AG04449 (cell line): ENCODE measurements at regions of chr11 and their contacts with region 1.

Region 1: DNA sequence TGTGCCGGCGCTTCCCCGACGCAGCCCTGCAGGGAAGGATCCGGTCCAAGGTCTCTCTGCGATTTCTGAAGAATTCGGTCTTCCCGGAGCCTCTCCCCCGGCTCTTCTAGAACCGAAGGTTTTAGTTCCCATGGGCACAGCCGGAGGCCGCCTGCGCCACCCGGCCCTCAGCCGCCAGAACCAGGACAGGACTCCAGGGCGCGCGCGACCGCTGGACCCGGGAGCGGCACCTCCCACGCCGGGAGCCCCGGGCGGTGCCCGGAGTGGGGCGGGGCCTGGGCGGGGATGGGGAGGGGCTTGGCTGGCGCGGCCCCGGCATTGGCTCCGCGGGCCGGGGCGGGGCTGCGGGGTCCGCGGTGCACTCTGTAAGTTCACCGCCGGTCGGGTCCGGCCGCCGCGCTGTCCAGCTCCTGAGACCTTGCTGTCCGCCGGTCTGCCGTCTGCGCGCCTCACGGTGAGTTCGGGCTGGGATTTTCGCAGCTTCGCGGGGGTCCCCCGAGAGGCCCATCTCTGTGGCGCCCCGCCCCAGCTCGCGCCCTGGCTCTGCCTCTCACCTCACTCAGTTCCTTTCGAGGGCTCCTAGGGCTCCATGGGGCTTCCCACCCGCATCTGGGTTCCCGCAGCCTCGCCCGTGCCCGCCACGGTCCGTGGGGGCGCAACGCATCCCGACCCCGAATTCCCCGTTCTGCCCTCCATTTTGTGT is at the start of gene CDC42EP2:
- DNase-seq: no peak
- H3K4me3 ChIP-seq: peak within 1 kb of the TSS; percentile 87
- CTCF ChIP-seq: no peak

Region 2: GRCh38 chr11:65204646-65205601 is 109.7 kb before region 1 on chr11:
- CTCF ChIA-PET with region 1: interaction called, 12 read pairs
- POLR2A ChIA-PET with region 1: no interaction called
- DNase-seq: no peak
- H3K4me3 ChIP-seq: no peak overlapping the region
- CTCF ChIP-seq: peak; percentile 88

Region 3: DNA sequence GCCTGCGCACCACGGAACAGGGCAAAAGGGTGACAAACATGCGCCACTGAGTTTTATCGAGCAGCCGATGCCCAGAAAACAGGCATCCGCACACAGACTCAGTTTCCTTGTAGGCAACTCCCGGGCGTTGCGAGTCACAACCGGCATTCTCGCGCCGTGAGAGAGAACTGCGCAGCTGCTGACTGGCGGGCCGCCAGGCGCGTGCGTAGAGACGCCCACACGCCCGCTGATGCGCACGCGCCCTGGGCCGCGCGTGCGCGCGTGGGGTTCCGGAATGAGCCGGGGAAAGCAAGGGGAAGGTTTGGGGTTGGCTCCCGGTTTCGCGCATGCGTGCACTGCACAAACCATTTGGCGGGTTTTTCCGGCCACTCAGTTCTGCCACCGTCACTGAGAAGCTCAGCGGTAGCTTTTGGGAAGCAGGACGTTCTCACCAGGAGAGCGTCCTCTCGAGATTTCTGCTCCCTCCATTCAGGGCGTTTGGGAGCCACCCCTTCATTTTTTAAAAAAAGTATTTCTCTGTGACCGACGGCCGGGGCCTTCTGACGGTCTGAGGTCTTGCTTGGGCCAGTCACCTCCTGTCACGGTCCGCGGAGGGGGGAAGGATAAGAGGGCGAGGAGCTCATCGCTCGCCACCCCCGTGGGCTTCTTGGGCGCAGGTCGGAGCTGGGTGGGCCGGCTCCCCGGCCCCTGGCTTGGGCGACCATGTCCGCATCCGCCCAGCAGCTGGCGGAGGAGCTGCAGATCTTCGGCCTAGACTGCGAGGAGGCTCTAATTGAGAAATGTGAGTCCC is 52.9 kb before region 1 on chr11 and contains the start of gene POLA2:
- CTCF ChIA-PET with region 1: interaction called, 1,993 read pairs
- POLR2A ChIA-PET with region 1: interaction called, 4 read pairs
- DNase-seq: peak; percentile 47
- H3K4me3 ChIP-seq: peak within 1 kb of the TSS; percentile 79
- CTCF ChIP-seq: no peak

Region 4: DNA sequence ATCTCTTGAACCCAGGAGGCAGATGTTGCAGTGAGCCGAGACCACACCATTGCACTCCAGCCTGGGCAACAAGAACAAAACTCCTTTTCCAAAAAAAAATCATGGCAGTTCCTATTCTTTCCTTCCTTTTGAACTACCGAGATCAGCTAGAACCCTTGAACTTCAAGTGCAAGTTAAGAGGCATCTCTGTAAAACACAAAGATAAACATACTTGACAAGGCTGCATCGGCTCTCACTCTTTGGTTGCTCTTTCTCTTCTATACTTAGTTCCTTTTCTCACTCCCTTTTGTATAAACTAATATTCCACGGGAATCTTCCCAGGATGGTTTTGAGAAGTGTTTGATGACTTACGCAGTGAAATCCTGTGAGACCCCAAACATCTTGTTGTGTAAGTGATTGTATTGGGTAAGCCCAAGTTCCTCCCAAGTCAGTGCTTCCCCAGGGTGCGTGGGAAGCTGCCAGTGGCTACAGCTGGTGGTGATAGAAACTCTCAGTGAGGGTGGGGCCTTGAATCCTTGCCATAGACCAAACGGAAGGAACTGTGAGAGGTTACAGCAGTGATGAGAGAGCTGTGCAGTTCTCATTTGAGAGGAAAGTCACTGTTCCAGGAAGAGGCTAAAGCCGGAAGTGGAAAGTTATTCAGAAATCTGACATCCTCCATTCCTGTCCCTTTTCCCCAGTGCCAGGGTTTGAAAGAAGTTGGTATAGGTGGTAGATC is 24.0 kb before region 1 on chr11:
- CTCF ChIA-PET with region 1: interaction called, 1,993 read pairs
- POLR2A ChIA-PET with region 1: interaction called, 44 read pairs
- DNase-seq: peak; percentile 97
- H3K4me3 ChIP-seq: no peak overlapping the region
- CTCF ChIP-seq: no peak

Region 5: DNA sequence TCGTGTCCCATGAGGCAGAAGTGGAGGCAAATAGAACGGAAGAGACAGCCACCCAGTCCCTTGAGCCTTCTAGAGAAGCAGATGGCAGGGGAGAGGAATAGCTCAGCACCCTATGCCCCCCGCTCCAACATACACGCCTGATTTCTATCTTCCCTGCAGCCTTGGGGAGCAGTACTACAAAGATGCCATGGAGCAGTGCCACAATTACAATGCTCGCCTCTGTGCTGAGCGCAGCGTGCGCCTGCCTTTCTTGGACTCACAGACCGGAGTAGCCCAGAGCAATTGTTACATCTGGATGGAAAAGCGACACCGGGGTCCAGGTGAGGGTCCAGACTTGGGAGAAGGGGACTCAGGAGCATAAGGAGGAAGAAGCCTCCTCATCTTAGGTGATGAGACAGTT is 25.6 kb after region 1 on chr11:
- CTCF ChIA-PET with region 1: interaction called, 1,993 read pairs
- POLR2A ChIA-PET with region 1: no interaction called
- DNase-seq: no peak
- H3K4me3 ChIP-seq: no peak overlapping the region
- CTCF ChIP-seq: no peak